ENCODE measurements at regions of chr10 and their contacts with region 1.

Region 1: DNA sequence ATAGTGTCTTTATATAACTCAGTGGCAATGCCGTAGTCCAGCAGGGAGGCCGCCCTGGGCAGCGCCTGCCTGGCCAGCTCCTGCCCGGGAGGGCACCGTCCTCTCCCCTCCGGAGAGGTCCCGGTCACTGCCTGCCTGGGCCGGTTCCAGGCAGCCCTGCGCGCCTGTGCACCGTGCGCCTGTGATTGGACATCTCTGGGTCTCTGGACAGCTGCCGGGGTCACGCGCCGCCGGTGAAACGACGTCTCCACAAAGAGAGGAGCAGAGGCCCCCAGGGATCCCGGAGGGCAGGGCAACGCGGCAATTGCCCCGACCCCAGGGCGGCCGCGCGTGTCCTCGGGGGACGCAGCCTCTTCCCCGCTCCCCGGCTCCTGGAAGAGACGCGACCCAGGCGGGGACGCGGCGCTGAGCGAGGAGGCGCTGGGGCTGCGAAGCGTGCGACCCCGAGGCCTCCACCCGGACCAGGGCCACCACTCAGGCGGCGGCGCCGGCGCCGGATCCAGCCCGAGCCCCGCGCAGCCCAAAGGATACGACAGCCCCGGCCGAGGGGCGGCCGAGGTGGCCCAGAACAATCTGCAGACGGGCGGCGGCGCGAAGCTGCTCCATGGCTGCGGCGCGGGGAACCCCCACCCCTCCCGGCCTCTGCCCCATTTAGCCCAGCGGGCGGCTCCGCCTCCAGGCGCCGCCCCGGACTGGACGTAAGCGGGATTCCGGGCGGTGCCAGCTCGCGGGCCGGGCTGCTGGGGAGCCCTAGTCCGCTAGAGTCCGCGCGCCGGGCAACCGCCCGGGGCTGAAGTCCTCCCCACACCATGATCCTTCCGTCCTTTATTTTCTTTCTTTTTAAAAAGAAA is at the start of gene PHYH:
- DNase-seq: peak; percentile 87
- ATAC-seq: peak; percentile 65
- H3K4me3 Mint-ChIP-seq: peak within 1 kb of the TSS; percentile 80
- H3K27ac Mint-ChIP-seq: peak within 1 kb of the TSS; percentile 88
- H3K4me1 Mint-ChIP-seq: peaks cover 18% of the 10 kb centered on the region
- H3K27me3 Mint-ChIP-seq: no peaks in the 10 kb centered on the region
- total RNA-seq, gene PHYH: 11.7 to 12.8 TPM

Region 2: DNA sequence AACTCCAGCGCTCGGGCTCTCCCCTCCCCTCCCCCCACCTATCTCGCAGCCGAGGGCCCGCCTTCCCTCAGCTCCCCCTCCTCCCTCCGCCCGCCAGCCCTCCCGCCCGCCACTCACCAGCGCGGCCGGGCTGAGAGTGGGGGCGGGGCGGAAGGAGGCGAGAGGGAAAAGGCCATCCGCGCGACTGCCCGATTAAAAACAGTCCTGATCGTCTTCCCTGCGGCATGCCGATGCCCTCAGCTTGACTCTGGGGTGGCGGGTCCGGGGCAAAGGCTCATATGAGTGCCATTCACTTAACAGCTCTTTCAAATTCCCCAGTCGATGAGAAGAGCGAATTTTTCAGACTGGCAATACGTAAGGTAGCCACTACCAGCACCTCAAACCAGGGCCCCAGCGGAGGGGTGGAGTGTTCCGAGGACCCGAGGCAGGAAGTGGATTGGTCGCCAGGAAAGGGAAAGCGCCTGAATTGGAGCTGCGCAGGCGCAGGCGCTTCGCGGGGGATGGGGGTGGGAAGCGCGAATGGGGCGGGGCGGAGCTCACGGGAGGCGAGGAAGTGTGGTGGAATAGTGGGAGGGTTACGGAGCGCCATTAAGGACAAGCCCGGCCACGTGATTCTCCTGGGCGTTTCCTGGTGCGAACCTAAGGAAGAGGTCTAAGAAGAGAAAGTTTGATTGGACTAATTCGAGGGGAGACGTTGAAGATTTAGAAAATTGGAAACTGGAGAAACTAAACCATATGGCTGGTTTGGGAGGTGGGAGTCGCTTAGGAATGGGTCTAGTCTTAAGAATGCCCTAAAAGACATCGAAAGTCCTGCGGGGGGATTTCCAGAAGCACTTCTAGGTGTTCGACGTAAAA is 1256.6 kb before region 1 on chr10 and contains the start of gene UPF2:
- CTCF ChIA-PET with region 1: no interaction called
- POLR2A ChIA-PET with region 1: no interaction called
- intact Hi-C with region 1: loop called in 1 of 2 experiments (anchors 1 kb)
- DNase-seq: peak; percentile 99
- ATAC-seq: peak; percentile 90
- H3K4me3 Mint-ChIP-seq: peak within 1 kb of the TSS; percentile 99
- H3K27ac Mint-ChIP-seq: peak within 1 kb of the TSS; percentile 100
- H3K4me1 Mint-ChIP-seq: peaks cover 37% of the 10 kb centered on the region
- H3K27me3 Mint-ChIP-seq: peaks cover 2% of the 10 kb centered on the region
- total RNA-seq, gene UPF2: 34.2 to 46.8 TPM

Region 3: GRCh38 chr10:12129222-12130111 is 1170.2 kb before region 1 on chr10 and contains the start of gene SEC61A2:
- CTCF ChIA-PET with region 1: no interaction called
- POLR2A ChIA-PET with region 1: no interaction called
- intact Hi-C with region 1: loop called in 1 of 2 experiments (anchors 5 kb)
- DNase-seq: peak; percentile 99
- ATAC-seq: peak; percentile 96
- H3K4me3 Mint-ChIP-seq: peak within 1 kb of the TSS; percentile 81
- H3K27ac Mint-ChIP-seq: peak within 1 kb of the TSS; percentile 76
- H3K4me1 Mint-ChIP-seq: peaks cover 19% of the 10 kb centered on the region
- H3K27me3 Mint-ChIP-seq: no peaks in the 10 kb centered on the region
- total RNA-seq, gene SEC61A2: 11.3 to 12.0 TPM

Region 4: GRCh38 chr10:13160934-13161856 is 138.5 kb before region 1 on chr10 and contains the start of gene MCM10:
- CTCF ChIA-PET with region 1: interaction called, 16 read pairs
- POLR2A ChIA-PET with region 1: interaction called, 3 read pairs
- intact Hi-C with region 1: loop called (anchors 1 kb)
- DNase-seq: peak; percentile 98
- ATAC-seq: peak; percentile 100
- H3K4me3 Mint-ChIP-seq: peak within 1 kb of the TSS; percentile 91
- H3K27ac Mint-ChIP-seq: peak within 1 kb of the TSS; percentile 86
- H3K4me1 Mint-ChIP-seq: peaks cover 26% of the 10 kb centered on the region
- H3K27me3 Mint-ChIP-seq: no peaks in the 10 kb centered on the region
- total RNA-seq, gene MCM10: 86.0 to 86.2 TPM

Region 5: DNA sequence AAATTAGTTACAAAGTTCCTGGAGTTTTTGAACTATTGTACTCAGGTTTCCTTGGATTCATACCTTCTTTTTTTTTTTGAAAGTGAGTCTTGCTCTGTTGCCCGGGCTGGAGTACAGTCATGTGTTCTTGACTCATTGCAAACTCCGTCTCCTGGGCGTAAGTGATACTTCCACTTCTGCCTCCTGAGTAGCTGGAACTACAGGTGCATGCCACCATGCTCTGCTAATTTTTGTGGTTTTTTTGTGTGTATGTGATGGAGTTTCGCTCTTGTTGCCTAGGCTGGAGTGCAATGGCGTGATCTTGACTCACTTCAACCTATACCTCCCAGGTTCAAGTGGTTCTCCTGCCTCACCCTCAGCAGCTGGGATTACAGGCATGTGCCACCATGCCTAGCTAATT is 116.0 kb before region 1 on chr10:
- CTCF ChIA-PET with region 1: no interaction called
- POLR2A ChIA-PET with region 1: no interaction called
- intact Hi-C with region 1: no loop called
- DNase-seq: no peak
- ATAC-seq: no peak
- H3K4me3 Mint-ChIP-seq: no peak overlapping the region
- H3K27ac Mint-ChIP-seq: no peak overlapping the region
- H3K4me1 Mint-ChIP-seq: peaks cover 5% of the 10 kb centered on the region
- H3K27me3 Mint-ChIP-seq: no peaks in the 10 kb centered on the region

Region 6: GRCh38 chr10:13271552-13272163 is 28.0 kb before region 1 on chr10:
- CTCF ChIA-PET with region 1: interaction called, 9 read pairs
- POLR2A ChIA-PET with region 1: no interaction called
- intact Hi-C with region 1: loop called in 1 of 2 experiments (anchors 2 kb)
- DNase-seq: peak; percentile 72
- ATAC-seq: peak; percentile 64
- H3K4me3 Mint-ChIP-seq: no peak overlapping the region
- H3K27ac Mint-ChIP-seq: no peak overlapping the region
- H3K4me1 Mint-ChIP-seq: no peaks in the 10 kb centered on the region
- H3K27me3 Mint-ChIP-seq: no peaks in the 10 kb centered on the region

Region 7: DNA sequence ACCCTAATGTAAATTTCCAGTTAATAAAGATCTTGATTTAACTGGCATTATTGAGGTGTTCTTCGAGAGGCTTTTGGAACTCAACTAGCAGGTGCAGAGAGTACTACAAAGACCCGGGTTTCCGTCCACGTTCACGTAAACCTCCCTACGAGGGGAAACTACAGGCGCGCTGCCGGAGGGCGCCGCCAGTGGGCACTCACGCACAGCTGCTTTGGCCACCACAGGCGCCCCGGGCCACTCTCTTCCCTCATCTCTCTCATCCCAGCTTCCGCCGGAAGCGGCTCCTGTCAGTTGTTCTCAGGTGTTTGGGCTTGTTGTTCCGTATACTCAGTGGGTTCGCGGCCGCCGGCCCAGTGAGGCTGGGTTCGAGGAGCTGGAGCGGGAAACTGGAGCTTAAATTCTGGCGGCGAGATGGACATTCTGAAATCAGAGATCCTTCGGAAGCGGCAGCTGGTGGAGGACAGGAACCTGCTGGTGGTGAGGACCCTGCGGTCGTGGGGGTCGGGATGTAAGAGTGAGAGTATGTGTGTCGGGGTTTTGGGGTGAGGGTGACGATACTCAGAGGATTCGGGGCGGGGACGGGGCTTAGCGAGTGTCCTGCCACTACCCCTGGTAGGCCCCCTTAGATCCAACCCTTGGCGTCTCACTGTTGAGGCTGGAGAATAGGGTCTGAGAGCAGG is 287.2 kb after region 1 on chr10 and contains the start of gene PRPF18:
- CTCF ChIA-PET with region 1: interaction called, 3 read pairs
- POLR2A ChIA-PET with region 1: interaction called, 3 read pairs
- intact Hi-C with region 1: loop called in 1 of 2 experiments (anchors 1 kb)
- DNase-seq: peak; percentile 97
- ATAC-seq: peak; percentile 100
- H3K4me3 Mint-ChIP-seq: peak within 1 kb of the TSS; percentile 99
- H3K27ac Mint-ChIP-seq: peak within 1 kb of the TSS; percentile 95
- H3K4me1 Mint-ChIP-seq: peaks cover 29% of the 10 kb centered on the region
- H3K27me3 Mint-ChIP-seq: peaks cover 8% of the 10 kb centered on the region
- total RNA-seq, gene PRPF18: 21.0 to 22.1 TPM

Region 8: GRCh38 chr10:13787015-13787421 is 487.4 kb after region 1 on chr10:
- CTCF ChIA-PET with region 1: no interaction called
- POLR2A ChIA-PET with region 1: no interaction called
- intact Hi-C with region 1: no loop called
- DNase-seq: peak; percentile 87
- ATAC-seq: peak; percentile 87
- H3K4me3 Mint-ChIP-seq: peak overlapping the region; percentile 32
- H3K27ac Mint-ChIP-seq: peak overlapping the region; percentile 90
- H3K4me1 Mint-ChIP-seq: peaks cover 22% of the 10 kb centered on the region
- H3K27me3 Mint-ChIP-seq: no peaks in the 10 kb centered on the region

Measured in activated CD4-positive, alpha-beta T cell treated with anti-CD3 and anti-CD28 coated beads for 36 hours (primary cell).